Activated naive CD4-positive, alpha-beta T cell treated with anti-CD3 and anti-CD28 coated beads for 36 hours (primary cell): ENCODE measurements at regions of chr10 and their contacts with region 1.

Region 1: GRCh38 chr10:28302638-28303488 is at the start of gene MPP7:
- DNase-seq: peak; percentile 95
- H3K4me3 Mint-ChIP-seq: peak within 1 kb of the TSS; percentile 82
- H3K27ac Mint-ChIP-seq: peak within 1 kb of the TSS; percentile 77
- H3K4me1 Mint-ChIP-seq: peaks cover 53% of the 10 kb centered on the region
- H3K27me3 Mint-ChIP-seq: no peaks in the 10 kb centered on the region
- total RNA-seq, gene MPP7: 23.6 to 25.4 TPM

Region 2: DNA sequence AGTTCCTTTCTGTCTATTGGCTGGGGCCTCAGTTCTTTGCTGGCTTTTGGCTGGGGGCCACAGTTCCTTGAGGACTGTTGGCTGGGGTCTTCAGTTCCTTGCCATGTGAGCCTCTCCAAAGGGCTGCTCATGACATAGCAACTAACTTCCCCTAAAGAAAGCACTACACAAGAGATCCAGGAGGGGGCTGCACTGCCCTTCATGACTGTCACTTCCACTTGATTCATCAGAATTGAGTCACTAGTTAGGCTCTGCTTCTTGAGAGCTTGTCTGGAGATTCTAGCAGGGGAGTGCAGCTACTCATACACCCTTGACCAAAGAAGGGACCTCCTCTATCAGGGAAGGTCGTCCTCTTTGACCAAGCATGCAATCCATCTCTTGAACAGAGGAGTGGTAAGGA is 519.2 kb before region 1 on chr10:
- CTCF ChIA-PET with region 1: no interaction called
- intact Hi-C with region 1: loop called (anchors 1 kb)
- DNase-seq: peak; percentile 57
- H3K4me3 Mint-ChIP-seq: no peak overlapping the region
- H3K27ac Mint-ChIP-seq: no peak overlapping the region
- H3K4me1 Mint-ChIP-seq: no peaks in the 10 kb centered on the region
- H3K27me3 Mint-ChIP-seq: peaks cover 8% of the 10 kb centered on the region

Region 3: DNA sequence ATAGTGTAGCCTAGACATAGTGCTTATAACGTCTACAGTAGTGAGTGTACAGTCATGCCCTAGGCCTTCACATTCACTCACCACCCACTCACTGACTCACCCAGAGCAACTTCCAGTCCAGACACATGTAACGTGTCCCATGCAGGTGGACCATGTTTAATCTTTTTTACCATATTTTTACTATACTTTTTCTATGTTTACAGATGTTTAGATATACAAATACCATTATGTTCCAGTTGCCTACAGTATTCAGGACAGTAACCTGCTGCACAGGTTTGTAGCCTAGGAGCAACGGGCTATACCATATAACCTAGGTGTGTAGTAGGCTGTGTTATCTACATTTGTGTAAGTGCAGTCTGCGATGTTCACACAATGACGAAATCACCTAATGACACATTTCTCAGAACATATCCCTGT is 11.0 kb before region 1 on chr10:
- CTCF ChIA-PET with region 1: interaction called, 8 read pairs
- intact Hi-C with region 1: loop called (anchors 1 kb)
- DNase-seq: peak; percentile 84
- H3K4me3 Mint-ChIP-seq: no peak overlapping the region
- H3K27ac Mint-ChIP-seq: peak overlapping the region; percentile 89
- H3K4me1 Mint-ChIP-seq: peaks cover 73% of the 10 kb centered on the region
- H3K27me3 Mint-ChIP-seq: no peaks in the 10 kb centered on the region

Region 4: GRCh38 chr10:28367929-28368484 is 65.1 kb after region 1 on chr10:
- CTCF ChIA-PET with region 1: interaction called, 21 read pairs
- intact Hi-C with region 1: loop called (anchors 1 kb)
- DNase-seq: peak; percentile 78
- H3K4me3 Mint-ChIP-seq: peak overlapping the region; percentile 49
- H3K27ac Mint-ChIP-seq: peak overlapping the region; percentile 91
- H3K4me1 Mint-ChIP-seq: peaks cover 44% of the 10 kb centered on the region
- H3K27me3 Mint-ChIP-seq: no peaks in the 10 kb centered on the region

Region 5: GRCh38 chr10:28400681-28401080 is 97.8 kb after region 1 on chr10:
- CTCF ChIA-PET with region 1: no interaction called
- intact Hi-C with region 1: no loop called
- DNase-seq: no peak
- H3K4me3 Mint-ChIP-seq: no peak overlapping the region
- H3K27ac Mint-ChIP-seq: no peak overlapping the region
- H3K4me1 Mint-ChIP-seq: peaks cover 5% of the 10 kb centered on the region
- H3K27me3 Mint-ChIP-seq: peaks cover 2% of the 10 kb centered on the region